ENCODE measurements at regions of chr2 and their contacts with region 1.

Region 1: DNA sequence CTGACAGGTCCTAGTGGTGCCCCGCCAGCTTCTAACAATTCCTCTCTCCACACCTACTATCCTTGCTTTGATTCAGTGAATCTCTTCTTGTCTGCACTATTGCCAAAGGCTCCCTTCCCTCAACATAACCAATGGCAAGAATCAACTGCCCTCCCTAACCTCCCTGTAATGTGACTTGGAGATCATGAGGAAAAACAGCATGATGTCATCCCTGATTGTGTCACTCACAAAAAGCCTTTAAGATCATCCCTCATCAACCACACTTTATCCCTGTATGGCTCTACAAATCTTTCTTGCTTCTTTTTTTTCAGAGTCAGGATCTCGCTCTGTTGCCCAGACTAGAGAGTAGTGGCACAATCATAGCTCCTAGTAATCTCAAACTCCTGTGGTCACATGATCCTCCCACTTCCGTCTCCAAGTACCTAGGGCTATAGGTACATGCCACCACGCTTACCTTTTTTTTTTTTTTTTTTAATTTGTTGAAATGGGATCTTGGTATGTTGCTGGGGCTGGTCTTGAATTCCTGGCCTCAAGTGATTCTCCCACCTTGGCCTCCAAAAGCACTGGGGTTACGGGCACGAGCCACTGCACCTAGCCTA is 19.7 kb downstream of the SAP130 start:
- DNase-seq: no peak
- ATAC-seq: no peak
- H3K4me3 Mint-ChIP-seq: no peak overlapping the region
- H3K27ac Mint-ChIP-seq: peak overlapping the region; percentile 4
- H3K4me1 Mint-ChIP-seq: peaks cover 3% of the 10 kb centered on the region
- H3K27me3 Mint-ChIP-seq: no peaks in the 10 kb centered on the region

Region 2: GRCh38 chr2:127675331-127676261 is 332.6 kb before region 1 on chr2 and contains the start of gene LIMS2:
- CTCF ChIA-PET with region 1: no interaction called
- POLR2A ChIA-PET with region 1: no interaction called
- intact Hi-C with region 1: no loop called
- DNase-seq: no peak
- ATAC-seq: no peak
- H3K4me3 Mint-ChIP-seq: peak within 1 kb of the TSS; percentile 57
- H3K27ac Mint-ChIP-seq: no peak within 1 kb of the TSS
- H3K4me1 Mint-ChIP-seq: peaks cover 7% of the 10 kb centered on the region
- H3K27me3 Mint-ChIP-seq: peaks cover 33% of the 10 kb centered on the region
- total RNA-seq, gene LIMS2: 16.4 to 19.3 TPM

Region 3: GRCh38 chr2:128115921-128116623 is 107.9 kb after region 1 on chr2:
- CTCF ChIA-PET with region 1: no interaction called
- POLR2A ChIA-PET with region 1: interaction called, 10 read pairs
- intact Hi-C with region 1: no loop called
- DNase-seq: no peak
- ATAC-seq: no peak
- H3K4me3 Mint-ChIP-seq: no peak overlapping the region
- H3K27ac Mint-ChIP-seq: no peak overlapping the region
- H3K4me1 Mint-ChIP-seq: no peaks in the 10 kb centered on the region
- H3K27me3 Mint-ChIP-seq: no peaks in the 10 kb centered on the region